ENCODE measurements at regions of chr2 and their contacts with region 1.

Region 1: DNA sequence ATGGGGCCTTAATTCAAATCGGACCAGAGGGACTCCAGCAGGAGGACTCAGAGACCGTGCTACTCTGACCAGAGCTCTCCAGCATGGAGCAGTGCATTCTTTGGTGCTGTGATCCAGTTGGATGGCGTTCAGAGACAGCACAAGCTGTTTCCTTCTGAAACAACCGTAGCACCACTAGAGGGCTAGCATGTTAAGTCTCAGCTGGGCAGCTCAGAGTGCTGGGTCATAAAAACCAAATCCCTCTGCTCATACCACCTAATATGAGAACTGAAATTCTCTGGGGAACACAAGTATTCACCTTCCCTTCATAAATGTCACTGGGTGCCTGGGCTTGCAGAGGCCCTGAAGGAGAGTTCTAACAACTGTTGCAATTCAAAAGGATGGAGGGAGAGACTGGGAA is 97.7 kb upstream of the TFCP2L1 start:
- DNase-seq: no peak
- H3K4me3 ChIP-seq: no peak overlapping the region
- H3K27ac ChIP-seq: no peak overlapping the region
- H3K4me1 ChIP-seq: no peaks in the 10 kb centered on the region
- H3K27me3 ChIP-seq: no peaks in the 10 kb centered on the region
- CTCF ChIP-seq: no peak
- POLR2A ChIP-seq: no peak

Region 2: DNA sequence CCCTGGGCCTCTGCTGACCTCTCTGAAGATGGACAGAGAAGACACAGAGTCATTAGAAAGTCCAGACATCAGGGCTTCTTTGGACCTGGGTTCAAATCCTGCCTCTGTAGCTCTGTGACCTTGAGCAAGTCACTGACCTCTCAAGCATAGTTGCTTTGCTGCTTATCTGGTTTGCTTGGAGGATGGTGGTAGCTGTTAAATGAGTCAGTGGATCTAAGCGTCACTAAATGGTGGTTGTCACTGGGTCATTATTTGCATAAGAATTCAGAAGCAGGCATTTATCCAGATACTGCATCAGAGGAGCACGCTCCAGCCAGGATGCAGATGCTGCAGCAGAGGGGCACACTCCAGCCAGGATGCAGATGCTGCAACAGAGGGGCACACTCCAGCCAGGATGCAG is 417.9 kb before region 1 on chr2:
- intact Hi-C with region 1: loop called (anchors 5 kb)
- DNase-seq: no peak
- H3K4me3 ChIP-seq: no peak overlapping the region
- H3K27ac ChIP-seq: no peak overlapping the region
- H3K4me1 ChIP-seq: no peaks in the 10 kb centered on the region
- H3K27me3 ChIP-seq: no peaks in the 10 kb centered on the region
- CTCF ChIP-seq: no peak
- POLR2A ChIP-seq: no peak

Region 3: DNA sequence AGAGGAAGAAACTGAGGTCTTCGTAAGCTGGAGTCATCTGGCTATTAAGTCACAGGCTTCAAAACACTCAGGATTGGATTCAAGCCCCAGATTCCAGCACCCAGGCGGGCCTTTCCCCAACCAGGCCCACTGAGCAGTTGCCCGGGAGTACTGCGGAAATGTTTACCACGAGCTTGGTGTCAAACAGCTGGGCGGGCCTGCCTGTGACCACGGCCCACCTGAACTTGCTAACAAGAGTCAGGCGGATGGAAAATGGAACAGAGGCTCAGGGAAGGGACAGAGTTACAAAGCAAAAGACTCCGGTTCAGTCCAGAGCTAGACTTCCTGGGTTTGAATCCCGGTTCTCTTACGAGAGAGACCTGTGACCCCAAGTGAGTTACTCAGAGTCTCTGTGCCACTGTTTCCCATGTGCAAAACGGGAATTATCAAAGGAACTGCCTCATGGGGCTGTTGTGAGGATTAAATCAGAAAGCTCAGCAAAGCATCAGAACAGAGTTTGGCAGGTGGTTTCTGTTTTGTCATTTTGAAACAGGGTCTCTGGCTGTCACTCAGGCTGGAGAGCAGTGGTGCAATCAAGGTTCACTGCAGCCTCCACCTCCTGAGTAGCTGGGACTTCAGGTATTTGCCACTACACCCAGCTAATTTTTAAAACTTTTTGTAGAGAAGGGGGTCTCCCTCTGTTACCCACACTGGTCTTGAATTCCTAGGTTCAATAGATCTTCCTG is 48.7 kb before region 1 on chr2:
- intact Hi-C with region 1: no loop called
- DNase-seq: no peak
- H3K4me3 ChIP-seq: no peak overlapping the region
- H3K27ac ChIP-seq: no peak overlapping the region
- H3K4me1 ChIP-seq: no peaks in the 10 kb centered on the region
- H3K27me3 ChIP-seq: no peaks in the 10 kb centered on the region
- CTCF ChIP-seq: no peak
- POLR2A ChIP-seq: no peak